ENCODE measurements at regions of chr15 and their contacts with region 1.

Region 1: DNA sequence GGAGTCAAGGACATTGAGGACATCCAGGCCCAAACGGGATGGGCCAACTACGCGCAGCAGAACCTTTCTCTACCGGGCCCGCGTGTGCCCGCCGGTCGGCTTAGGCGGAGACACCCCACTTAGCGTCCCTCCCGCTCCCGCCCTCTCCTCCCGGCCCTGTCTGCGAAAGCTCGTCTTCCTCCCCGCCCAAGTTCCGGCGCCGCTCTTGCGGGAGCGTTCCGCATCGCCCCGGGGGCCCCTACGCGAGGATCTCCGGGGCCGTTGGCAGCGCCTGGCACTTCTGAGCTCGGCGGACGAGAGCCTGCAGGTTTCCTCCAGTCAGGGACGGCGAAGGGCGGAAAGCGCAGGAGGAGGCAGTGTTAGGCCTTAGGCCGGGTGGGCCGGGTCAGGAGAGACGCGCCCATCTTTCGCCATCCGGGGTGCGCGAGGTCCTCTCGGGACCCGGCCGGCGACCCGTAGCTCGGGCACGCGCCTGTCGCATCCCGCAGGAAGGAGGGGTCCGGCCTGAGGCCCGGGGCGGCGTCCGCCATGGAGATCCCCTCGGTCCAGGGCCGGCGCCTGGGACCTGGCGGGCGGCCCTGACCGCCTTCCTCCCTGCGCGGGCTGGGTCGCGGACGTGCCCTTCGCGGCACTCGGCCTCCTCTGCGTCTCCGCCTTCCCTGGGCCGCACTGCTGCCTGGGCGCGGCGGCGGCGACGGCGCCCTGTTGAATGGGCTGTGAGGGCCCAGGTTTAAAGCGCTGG is at the start of gene FEM1B:
- DNase-seq: peak; percentile 91
- ATAC-seq: peak; percentile 84
- H3K4me3 Mint-ChIP-seq: peak within 1 kb of the TSS; percentile 96
- H3K27ac Mint-ChIP-seq: peak within 1 kb of the TSS; percentile 95
- H3K4me1 Mint-ChIP-seq: peaks cover 30% of the 10 kb centered on the region
- H3K27me3 Mint-ChIP-seq: no peaks in the 10 kb centered on the region
- total RNA-seq, gene FEM1B: 51.9 to 54.0 TPM

Region 2: GRCh38 chr15:68229386-68230156 is 48.2 kb before region 1 on chr15 and contains the start of gene CLN6:
- POLR2A ChIA-PET with region 1: interaction called, 16 read pairs
- DNase-seq: peak; percentile 93
- ATAC-seq: peak; percentile 85
- H3K4me3 Mint-ChIP-seq: peak within 1 kb of the TSS; percentile 99
- H3K27ac Mint-ChIP-seq: peak within 1 kb of the TSS; percentile 97
- H3K4me1 Mint-ChIP-seq: peaks cover 35% of the 10 kb centered on the region
- H3K27me3 Mint-ChIP-seq: peaks cover 3% of the 10 kb centered on the region
- total RNA-seq, gene CLN6: 38.4 to 42.1 TPM

Region 3: GRCh38 chr15:68252925-68253534 is 24.7 kb before region 1 on chr15:
- POLR2A ChIA-PET with region 1: interaction called, 18 read pairs
- DNase-seq: no peak
- ATAC-seq: peak; percentile 34
- H3K4me3 Mint-ChIP-seq: no peak overlapping the region
- H3K27ac Mint-ChIP-seq: no peak overlapping the region
- H3K4me1 Mint-ChIP-seq: peaks cover 3% of the 10 kb centered on the region
- H3K27me3 Mint-ChIP-seq: peaks cover 36% of the 10 kb centered on the region

Region 4: GRCh38 chr15:68292157-68292781 is 14.5 kb after region 1 on chr15:
- POLR2A ChIA-PET with region 1: interaction called, 11 read pairs
- DNase-seq: no peak
- ATAC-seq: peak; percentile 45
- H3K4me3 Mint-ChIP-seq: peak overlapping the region; percentile 24
- H3K27ac Mint-ChIP-seq: peak overlapping the region; percentile 55
- H3K4me1 Mint-ChIP-seq: peaks cover 31% of the 10 kb centered on the region
- H3K27me3 Mint-ChIP-seq: no peaks in the 10 kb centered on the region

Region 5: GRCh38 chr15:68298882-68299381 is 21.2 kb after region 1 on chr15:
- POLR2A ChIA-PET with region 1: interaction called, 17 read pairs
- DNase-seq: peak; percentile 27
- ATAC-seq: peak; percentile 78
- H3K4me3 Mint-ChIP-seq: peak overlapping the region; percentile 76
- H3K27ac Mint-ChIP-seq: peak overlapping the region; percentile 87
- H3K4me1 Mint-ChIP-seq: peaks cover 16% of the 10 kb centered on the region
- H3K27me3 Mint-ChIP-seq: no peaks in the 10 kb centered on the region

Region 6: DNA sequence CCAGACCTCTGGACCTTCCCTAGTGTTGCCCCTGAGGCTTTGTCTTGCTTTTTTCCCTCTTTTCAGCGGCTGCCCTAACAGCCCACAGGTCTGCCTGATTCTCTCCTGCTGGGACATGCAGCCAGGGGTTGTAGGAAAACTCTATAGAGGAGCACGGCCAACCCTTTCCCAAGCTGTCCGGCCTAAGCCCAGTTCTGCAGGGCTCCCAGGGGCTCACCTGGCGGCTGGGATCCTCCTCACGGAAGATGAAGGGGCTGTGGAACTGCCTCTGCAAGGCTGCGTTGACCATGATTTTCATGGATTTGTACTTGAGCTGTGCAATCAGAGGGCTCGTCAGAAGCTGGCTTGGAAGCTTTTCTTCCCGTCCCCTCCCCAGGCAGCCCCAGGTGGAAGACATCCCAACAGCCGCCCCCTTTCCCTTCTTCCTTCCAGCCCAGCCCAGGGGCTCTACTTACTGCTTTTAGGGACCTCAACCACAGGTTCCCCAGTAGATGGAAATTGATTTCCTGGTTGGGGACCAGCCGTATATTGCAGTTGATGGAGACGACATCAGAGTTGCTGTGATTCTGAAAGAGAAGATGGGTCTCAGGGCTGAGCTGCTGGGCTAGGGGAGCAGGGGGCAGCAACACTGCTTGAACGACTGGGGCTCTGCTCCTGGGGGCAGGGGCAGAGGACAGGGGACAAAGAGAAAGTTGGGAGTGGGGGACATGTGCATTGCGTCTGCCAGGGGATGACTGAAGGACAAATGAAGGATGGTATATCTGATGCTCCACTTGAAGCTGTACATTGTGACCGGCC is 29.6 kb after region 1 on chr15:
- POLR2A ChIA-PET with region 1: interaction called, 13 read pairs
- DNase-seq: peak; percentile 25
- ATAC-seq: no peak
- H3K4me3 Mint-ChIP-seq: no peak overlapping the region
- H3K27ac Mint-ChIP-seq: no peak overlapping the region
- H3K4me1 Mint-ChIP-seq: peaks cover 9% of the 10 kb centered on the region
- H3K27me3 Mint-ChIP-seq: peaks cover 7% of the 10 kb centered on the region